ENCODE measurements at regions of chr9 and their contacts with region 1.

Region 1: DNA sequence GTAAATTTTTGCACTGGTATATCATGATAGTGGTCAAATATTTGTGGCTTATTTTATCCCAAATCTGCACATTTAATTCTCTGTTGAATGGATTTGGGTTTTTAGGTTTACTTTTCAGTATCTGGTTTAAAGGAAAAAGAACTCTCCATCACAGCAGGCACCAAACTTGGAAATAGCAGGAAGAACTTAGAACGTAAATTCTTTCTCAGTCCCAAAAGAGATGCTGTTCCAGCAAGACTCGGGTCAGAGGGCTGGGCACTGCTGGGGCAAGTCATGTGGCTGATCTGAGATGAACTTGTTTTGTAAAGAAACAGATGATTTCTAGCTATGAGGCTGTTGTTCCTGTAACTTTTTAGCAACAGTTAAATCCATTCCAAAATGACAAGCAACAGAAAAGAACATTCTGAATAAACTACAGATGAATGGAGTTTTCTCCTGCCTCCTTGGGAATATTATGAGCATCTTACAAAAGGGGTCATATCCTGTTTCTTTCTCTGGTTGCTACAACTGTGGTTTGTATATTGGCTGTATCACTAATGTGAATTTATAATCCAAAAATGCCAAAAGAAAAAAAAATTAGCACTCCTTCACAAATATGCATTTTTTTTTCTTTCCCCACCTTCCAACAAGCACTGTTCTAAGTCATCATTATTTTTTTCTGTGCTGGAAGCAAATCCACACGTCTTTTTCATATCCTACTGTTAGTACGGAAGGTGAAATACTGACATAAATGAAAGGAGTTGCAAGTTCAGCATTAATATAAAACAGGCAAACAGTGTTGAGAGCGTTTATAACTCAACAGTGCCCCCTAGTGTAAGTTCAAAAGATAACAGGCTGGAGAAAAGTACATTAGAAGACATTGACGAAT is 31.1 kb downstream of the OR2K2 start:
- DNase-seq: peak; percentile 37
- CTCF ChIP-seq: peak; percentile 58

Region 2: DNA sequence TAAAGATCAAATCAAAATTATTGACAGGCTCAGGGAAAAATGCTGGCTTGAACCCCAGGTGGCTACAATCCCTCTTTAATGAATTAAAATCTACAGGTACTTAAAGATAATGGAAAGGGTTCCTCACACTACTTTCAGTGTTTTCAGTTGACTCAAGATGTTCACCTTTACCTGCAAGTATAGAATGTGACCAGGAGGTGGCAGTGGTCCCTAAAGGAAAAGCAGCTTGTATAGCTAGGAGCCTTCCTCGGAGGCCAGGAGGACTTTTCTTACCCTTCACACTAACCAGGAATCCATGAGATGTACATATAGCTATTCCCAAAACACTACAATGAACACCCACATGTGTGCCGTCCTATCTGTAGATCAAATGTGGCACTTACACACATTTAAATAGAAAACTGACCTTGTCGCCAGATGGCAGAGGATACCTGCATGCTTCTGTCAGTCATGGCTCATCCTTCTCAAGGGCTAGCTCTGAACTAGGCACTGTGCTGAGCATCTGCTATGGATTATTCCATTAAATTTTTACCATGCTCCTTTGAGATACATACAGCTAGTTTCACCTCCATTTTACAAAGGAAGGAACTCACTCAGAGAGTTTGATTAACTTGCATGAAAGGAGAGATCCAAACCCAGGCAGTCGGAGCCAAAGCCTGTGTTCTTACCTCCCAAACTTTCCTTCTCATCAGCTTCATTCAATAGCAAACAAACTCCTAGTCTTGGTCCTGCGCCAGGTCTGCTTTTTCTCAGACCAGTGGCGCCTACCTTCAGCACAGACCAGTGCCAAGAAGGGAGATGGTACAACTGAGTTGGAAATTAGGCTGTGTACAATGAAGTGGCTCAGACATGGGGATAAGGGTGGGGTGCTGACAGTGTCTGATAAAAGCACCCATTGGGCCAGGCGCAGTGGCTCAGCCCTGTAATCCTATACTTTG is 1115.5 kb before region 1 on chr9:
- in situ Hi-C with region 1: loop called (anchors 25 kb)
- DNase-seq: peak; percentile 69
- CTCF ChIP-seq: peak; percentile 52

Region 3: DNA sequence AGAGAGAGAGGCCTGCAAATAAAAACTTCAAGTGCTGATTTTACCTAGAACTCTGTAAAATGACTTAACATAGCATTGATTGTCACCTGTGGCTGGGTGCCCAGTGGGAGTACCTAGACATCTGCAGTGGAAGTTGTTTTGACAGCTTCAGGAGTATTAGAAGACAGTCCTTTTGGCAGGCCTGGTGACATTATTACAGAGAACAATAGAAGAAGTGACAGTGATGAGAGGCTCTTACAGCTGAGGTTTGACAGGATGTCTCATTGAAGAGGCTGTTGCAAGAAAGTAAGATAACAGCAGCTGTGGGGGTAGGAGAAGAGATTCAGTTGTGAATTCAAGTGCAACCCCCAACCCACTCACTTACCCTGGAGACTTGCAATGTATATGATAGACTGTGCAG is 658.2 kb before region 1 on chr9:
- in situ Hi-C with region 1: loop called (anchors 10 kb)
- DNase-seq: no peak
- CTCF ChIP-seq: no peak

Region 4: GRCh38 chr9:111056538-111056937 is 242.4 kb before region 1 on chr9:
- in situ Hi-C with region 1: loop called (anchors 10 kb)
- DNase-seq: no peak
- CTCF ChIP-seq: no peak

Measured in GM13976 (cell line).